IMR-90 (cell line): ENCODE measurements at regions of chr11 and their contacts with region 1.

Region 1: DNA sequence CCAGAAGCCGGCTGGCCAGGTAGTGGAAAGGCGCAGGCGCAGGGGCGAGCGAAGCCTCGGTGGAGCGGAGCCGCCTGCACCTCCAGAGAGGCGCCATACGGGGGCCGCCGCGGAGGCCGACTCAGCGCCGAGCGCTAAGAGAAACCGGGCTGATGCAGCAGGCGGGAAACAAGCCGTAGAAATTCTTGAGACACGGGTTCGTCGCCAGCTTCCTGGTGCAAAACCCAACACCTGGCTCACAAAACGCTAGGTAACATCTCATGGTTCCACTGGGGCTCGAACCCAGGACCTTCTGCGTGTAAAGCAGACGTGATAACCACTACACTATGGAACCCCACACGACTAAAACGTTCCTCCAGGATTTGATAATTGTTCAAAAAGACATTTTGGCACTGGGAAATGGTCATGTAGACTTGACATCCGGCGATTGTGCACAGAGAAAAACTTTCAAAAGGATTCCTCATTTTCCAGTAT is 39.1 kb downstream of the OR4D9 start:
- DNase-seq: peak; percentile 97
- ATAC-seq: peak; percentile 90
- H3K4me3 ChIP-seq: peak overlapping the region; percentile 54
- H3K27ac ChIP-seq: peak overlapping the region; percentile 48; the same call in 1 of the 2 replicates
- H3K4me1 ChIP-seq: 0 out of 2 replicates have a peak, but pooled peaks cover 2% of the 10 kb centered on the region
- H3K27me3 ChIP-seq: no peaks in the 10 kb centered on the region
- CTCF ChIP-seq: peak; percentile 49
- POLR2A ChIP-seq: no peak
- RAD21 ChIP-seq: peak; percentile 33

Region 2: DNA sequence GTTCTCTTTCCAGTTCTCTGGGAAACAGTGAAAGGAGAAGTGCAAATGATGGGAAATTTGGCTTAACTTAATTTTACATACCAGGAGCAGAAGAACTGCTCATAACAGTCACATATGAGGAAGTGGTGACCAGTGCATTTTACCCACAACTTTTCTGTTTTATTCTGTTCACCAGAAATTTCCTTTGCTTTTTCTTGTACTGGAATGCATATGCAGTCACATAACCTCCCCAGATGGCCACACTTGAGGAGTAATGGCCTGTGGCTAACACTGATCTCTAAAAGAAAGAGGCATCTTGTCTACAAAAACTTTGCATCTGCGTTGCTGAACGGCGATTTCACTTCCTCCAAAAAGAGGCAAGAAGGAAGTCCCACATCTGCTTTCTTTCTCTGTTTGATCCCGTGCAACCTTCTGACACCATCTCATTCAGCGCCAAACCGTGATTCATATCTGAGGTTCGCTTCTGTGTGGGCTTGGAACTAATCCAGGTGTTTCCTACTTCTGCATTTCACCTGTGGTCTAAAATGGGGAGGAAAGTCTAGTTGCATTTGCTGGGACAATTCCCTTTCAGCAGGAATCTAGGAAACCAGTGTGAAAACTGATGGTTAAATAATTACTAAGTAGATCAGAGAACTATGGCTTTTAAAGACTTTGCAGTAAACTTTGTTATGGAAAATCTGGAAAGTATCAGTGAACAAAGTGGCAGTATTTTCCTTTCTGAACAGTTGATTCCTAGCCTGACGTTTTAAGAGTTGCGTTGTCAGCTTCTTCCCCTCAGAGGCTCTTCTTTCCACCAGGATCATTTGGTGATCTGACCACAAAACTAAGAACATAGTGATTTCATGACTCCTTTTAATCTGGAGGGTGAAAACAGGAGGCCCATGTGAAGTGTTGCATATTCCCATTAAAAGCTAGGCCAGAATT is 333.5 kb before region 1 on chr11:
- CTCF ChIA-PET with region 1: no interaction called
- POLR2A ChIA-PET with region 1: no interaction called
- dilution Hi-C with region 1: no loop called
- in situ Hi-C with region 1: no loop called
- intact Hi-C with region 1: no loop called
- DNase-seq: peak; percentile 67
- ATAC-seq: no peak
- H3K4me3 ChIP-seq: no peak overlapping the region
- H3K27ac ChIP-seq: no peak overlapping the region
- H3K4me1 ChIP-seq: peaks cover 18% of the 10 kb centered on the region
- H3K27me3 ChIP-seq: peaks cover 12% of the 10 kb centered on the region
- CTCF ChIP-seq: no peak
- POLR2A ChIP-seq: no peak
- RAD21 ChIP-seq: no peak

Region 3: DNA sequence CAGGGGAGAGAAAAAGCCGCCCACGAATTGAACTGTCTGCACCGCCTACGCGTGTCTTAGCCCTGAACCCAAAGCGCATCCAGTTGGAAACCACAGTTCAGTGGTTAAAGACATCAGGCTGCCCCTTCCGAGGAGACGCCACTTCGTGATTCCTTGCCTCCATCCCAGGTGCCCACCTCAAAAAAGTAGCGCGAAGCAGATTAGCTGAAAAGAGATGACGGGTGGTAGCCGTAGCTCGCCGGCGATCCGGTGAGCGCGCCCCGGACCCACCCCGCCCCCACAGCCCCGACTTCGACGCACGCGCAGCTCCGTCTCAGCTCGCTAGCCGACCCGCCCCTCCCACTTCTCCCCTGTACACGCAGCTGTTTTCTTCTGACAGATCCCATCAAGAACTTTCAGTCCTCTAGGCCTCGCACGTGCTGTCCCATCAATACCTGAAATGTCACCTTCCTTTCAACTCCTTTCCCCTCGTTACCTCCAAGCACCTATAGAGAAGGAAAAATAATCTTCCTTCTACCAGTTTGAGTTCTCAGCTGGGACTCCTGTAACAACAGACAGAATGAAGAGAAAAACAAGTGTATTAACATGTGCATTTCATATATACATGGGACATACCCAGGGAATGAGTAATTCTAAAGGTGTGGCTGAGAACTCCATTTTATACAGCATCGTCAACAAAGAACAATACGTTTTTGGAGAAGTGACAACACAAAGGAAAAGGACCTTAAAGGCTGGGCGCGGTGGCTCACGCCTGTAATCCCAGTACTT is 10.5 kb after region 1 on chr11:
- CTCF ChIA-PET with region 1: no interaction called
- POLR2A ChIA-PET with region 1: interaction called, 27 read pairs
- dilution Hi-C with region 1: no loop called
- in situ Hi-C with region 1: no loop called
- intact Hi-C with region 1: loop called (anchors 1 kb)
- DNase-seq: peak; percentile 82
- ATAC-seq: peak; percentile 42
- H3K4me3 ChIP-seq: peak overlapping the region; percentile 96
- H3K27ac ChIP-seq: peak overlapping the region; percentile 91
- H3K4me1 ChIP-seq: peaks cover 2% of the 10 kb centered on the region; the same call in 1 of the 2 replicates
- H3K27me3 ChIP-seq: no peaks in the 10 kb centered on the region
- CTCF ChIP-seq: no peak
- POLR2A ChIP-seq: no peak
- RAD21 ChIP-seq: no peak

Region 4: GRCh38 chr11:59802639-59803176 is 252.3 kb after region 1 on chr11:
- CTCF ChIA-PET with region 1: interaction called, 5 read pairs
- POLR2A ChIA-PET with region 1: no interaction called
- dilution Hi-C with region 1: no loop called
- in situ Hi-C with region 1: loop called (anchors 10 kb)
- intact Hi-C with region 1: loop called (anchors 5 kb)
- DNase-seq: peak; percentile 58
- ATAC-seq: peak; percentile 79
- H3K4me3 ChIP-seq: no peak overlapping the region
- H3K27ac ChIP-seq: no peak overlapping the region
- H3K4me1 ChIP-seq: no peaks in the 10 kb centered on the region
- H3K27me3 ChIP-seq: no peaks in the 10 kb centered on the region
- CTCF ChIP-seq: peak; percentile 77
- POLR2A ChIP-seq: no peak
- RAD21 ChIP-seq: peak; percentile 84